Activated B cell treated with CpG ODN at 0.5 μM for 24 hours (primary cell): ENCODE measurements at regions of chr6 and their contacts with region 1.

Region 1: GRCh38 chr6:32700391-32701040 is 34.1 kb upstream of the HLA-DQB1 start:
- DNase-seq: no peak
- ATAC-seq: peak; percentile 80
- H3K4me3 Mint-ChIP-seq: peak overlapping the region; percentile 86
- H3K27ac Mint-ChIP-seq: peak overlapping the region; percentile 91
- H3K4me1 Mint-ChIP-seq: peaks cover 32% of the 10 kb centered on the region
- H3K27me3 Mint-ChIP-seq: no peaks in the 10 kb centered on the region
- CTCF ChIP-seq: peak; percentile 32

Region 2: GRCh38 chr6:32432050-32432450 is 268.5 kb before region 1 on chr6:
- CTCF ChIA-PET with region 1: interaction called, 65 read pairs
- POLR2A ChIA-PET with region 1: interaction called, 8 read pairs
- intact Hi-C with region 1: loop called (anchors 1 kb)
- DNase-seq: no peak
- ATAC-seq: peak; percentile 43
- H3K4me3 Mint-ChIP-seq: no peak overlapping the region
- H3K27ac Mint-ChIP-seq: peak overlapping the region; percentile 24
- H3K4me1 Mint-ChIP-seq: peaks cover 33% of the 10 kb centered on the region
- H3K27me3 Mint-ChIP-seq: no peaks in the 10 kb centered on the region
- CTCF ChIP-seq: peak; percentile 65

Region 3: GRCh38 chr6:32581315-32582095 is 119.0 kb before region 1 on chr6:
- CTCF ChIA-PET with region 1: no interaction called
- POLR2A ChIA-PET with region 1: no interaction called
- intact Hi-C with region 1: loop called (anchors 5 kb)
- DNase-seq: no peak
- ATAC-seq: peak; percentile 22
- H3K4me3 Mint-ChIP-seq: no peak overlapping the region
- H3K27ac Mint-ChIP-seq: peak overlapping the region; percentile 83
- H3K4me1 Mint-ChIP-seq: peaks cover 48% of the 10 kb centered on the region
- H3K27me3 Mint-ChIP-seq: no peaks in the 10 kb centered on the region
- CTCF ChIP-seq: no peak